ENCODE measurements at regions of chr2 and their contacts with region 1.

Region 1: GRCh38 chr2:122451040-122451439 is 695.6 kb downstream of the TSN start:
- DNase-seq: peak in 1 of 2 experiments; percentile 47
- H3K4me3 ChIP-seq: no peak overlapping the region
- H3K4me3 Mint-ChIP-seq: no peak overlapping the region
- H3K27ac Mint-ChIP-seq: no peak overlapping the region
- H3K4me1 ChIP-seq: no peaks in the 10 kb centered on the region
- H3K4me1 Mint-ChIP-seq: no peaks in the 10 kb centered on the region
- H3K27me3 ChIP-seq: no peaks in the 10 kb centered on the region
- H3K27me3 Mint-ChIP-seq: no peaks in the 10 kb centered on the region
- CTCF ChIP-seq: peak; percentile 49 to 53

Region 2: DNA sequence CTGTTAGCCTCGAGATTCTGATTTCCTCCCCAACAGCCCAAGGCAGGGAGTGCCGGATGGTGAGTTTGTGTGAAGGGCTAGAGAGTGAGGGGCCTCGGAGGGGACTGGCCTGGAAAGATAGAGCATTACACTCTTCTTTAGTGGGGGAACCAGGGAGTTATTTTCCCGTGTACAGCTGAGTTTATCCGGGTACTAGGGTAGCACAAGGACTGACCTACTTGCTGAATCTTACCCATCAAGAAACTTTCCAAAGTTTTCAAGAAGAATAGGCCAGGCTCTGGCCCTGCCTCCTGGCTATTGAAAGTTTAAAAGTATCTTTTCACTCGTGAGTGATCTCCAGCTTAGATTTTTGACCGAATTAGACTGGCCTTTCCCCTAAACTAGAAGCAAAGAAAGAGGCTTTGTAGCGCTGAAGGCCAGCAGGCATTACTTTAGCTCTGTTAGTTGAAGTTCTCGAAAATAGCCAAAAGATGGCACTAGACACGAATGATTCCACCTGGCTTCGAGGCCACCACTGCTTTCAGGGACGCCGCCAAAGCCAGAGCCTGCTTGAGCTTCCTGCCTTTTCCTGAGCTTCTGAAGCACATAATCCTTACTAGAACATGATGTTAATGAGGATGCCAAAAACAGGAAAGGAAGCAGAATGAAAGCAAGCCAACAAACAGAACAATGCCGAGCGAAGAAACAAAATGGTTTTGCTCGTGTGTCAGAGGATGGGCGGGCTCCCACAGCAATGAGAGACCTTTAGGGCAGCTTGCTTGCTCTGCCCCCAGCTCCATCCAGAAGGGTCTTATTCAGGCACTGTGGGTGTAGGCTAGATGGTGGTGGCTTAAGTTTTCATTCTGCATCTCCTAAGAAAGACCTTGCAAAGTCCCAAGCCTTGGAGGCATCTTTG is 639.8 kb before region 1 on chr2:
- CTCF ChIA-PET with region 1: no interaction called
- POLR2A ChIA-PET with region 1: no interaction called
- intact Hi-C with region 1: loop called (anchors 10 kb)
- DNase-seq: peak; percentile 66 to 70
- H3K4me3 ChIP-seq: no peak overlapping the region
- H3K4me3 Mint-ChIP-seq: no peak overlapping the region
- H3K27ac Mint-ChIP-seq: no peak overlapping the region
- H3K4me1 ChIP-seq: no peaks in the 10 kb centered on the region
- H3K4me1 Mint-ChIP-seq: peaks cover 9% of the 10 kb centered on the region
- H3K27me3 ChIP-seq: no peaks in the 10 kb centered on the region
- H3K27me3 Mint-ChIP-seq: no peaks in the 10 kb centered on the region
- CTCF ChIP-seq: peak; percentile 60 to 65

Region 3: GRCh38 chr2:122191341-122191740 is 259.7 kb before region 1 on chr2:
- CTCF ChIA-PET with region 1: no interaction called
- POLR2A ChIA-PET with region 1: no interaction called
- intact Hi-C with region 1: loop called (anchors 1 kb)
- DNase-seq: peak; percentile 55 to 59
- H3K4me3 ChIP-seq: no peak overlapping the region
- H3K4me3 Mint-ChIP-seq: no peak overlapping the region
- H3K27ac Mint-ChIP-seq: no peak overlapping the region
- H3K4me1 ChIP-seq: no peaks in the 10 kb centered on the region
- H3K4me1 Mint-ChIP-seq: no peaks in the 10 kb centered on the region
- H3K27me3 ChIP-seq: no peaks in the 10 kb centered on the region
- H3K27me3 Mint-ChIP-seq: peaks cover 6% of the 10 kb centered on the region
- CTCF ChIP-seq: peak; percentile 31 to 56

Measured in Caco-2 (cell line).